Activated T-helper 2 cell treated with anti-CD3 and anti-CD28 coated beads, Interferon-gamma antibody, Interleukin-2, Interleukin-4, amounts not matched to agents 10 μg/mL and 5 μg/mL and 100 μg/mL, durations not matched to agents 14 hours and 24 hours and 36 hours (primary cell): ENCODE measurements at regions of chr10 and their contacts with region 1.

Region 1: GRCh38 chr10:78150756-78151155 is 117.1 kb downstream of the RPS24 start:
- DNase-seq: no peak
- H3K4me3 Mint-ChIP-seq: no peak overlapping the region
- H3K27ac Mint-ChIP-seq: no peak overlapping the region
- H3K4me1 Mint-ChIP-seq: peaks cover 22% of the 10 kb centered on the region
- H3K27me3 Mint-ChIP-seq: no peaks in the 10 kb centered on the region

Region 2: GRCh38 chr10:78134773-78135305 is 15.9 kb before region 1 on chr10:
- intact Hi-C with region 1: loop called (anchors 2 kb)
- DNase-seq: no peak
- H3K4me3 Mint-ChIP-seq: no peak overlapping the region
- H3K27ac Mint-ChIP-seq: no peak overlapping the region
- H3K4me1 Mint-ChIP-seq: peaks cover 13% of the 10 kb centered on the region
- H3K27me3 Mint-ChIP-seq: no peaks in the 10 kb centered on the region

Region 3: GRCh38 chr10:78196964-78197363 is 46.2 kb after region 1 on chr10:
- intact Hi-C with region 1: no loop called
- DNase-seq: no peak
- H3K4me3 Mint-ChIP-seq: no peak overlapping the region
- H3K27ac Mint-ChIP-seq: no peak overlapping the region
- H3K4me1 Mint-ChIP-seq: no peaks in the 10 kb centered on the region
- H3K27me3 Mint-ChIP-seq: no peaks in the 10 kb centered on the region

Region 4: GRCh38 chr10:78211561-78212051 is 60.9 kb after region 1 on chr10:
- intact Hi-C with region 1: no loop called
- DNase-seq: no peak
- H3K4me3 Mint-ChIP-seq: no peak overlapping the region
- H3K27ac Mint-ChIP-seq: no peak overlapping the region
- H3K4me1 Mint-ChIP-seq: peaks cover 4% of the 10 kb centered on the region
- H3K27me3 Mint-ChIP-seq: peaks cover 15% of the 10 kb centered on the region